IMR-90 (cell line): ENCODE measurements at regions of chr17 and their contacts with region 1.

Region 1: GRCh38 chr17:41060052-41060604 is at the start of gene KRTAP2-3:
- DNase-seq: peak; percentile 97
- ATAC-seq: peak; percentile 44
- H3K4me3 ChIP-seq: no peak within 1 kb of the TSS
- H3K27ac ChIP-seq: peak within 1 kb of the TSS; percentile 94
- H3K4me1 ChIP-seq: peaks cover 16% of the 10 kb centered on the region
- H3K27me3 ChIP-seq: no peaks in the 10 kb centered on the region
- CTCF ChIP-seq: no peak
- POLR2A ChIP-seq: no peak
- RAD21 ChIP-seq: no peak
- total RNA-seq, gene KRTAP2-3: 1.4 TPM in 2 replicates

Region 2: GRCh38 chr17:40956401-40957254 is 103.5 kb before region 1 on chr17:
- CTCF ChIA-PET with region 1: no interaction called
- POLR2A ChIA-PET with region 1: no interaction called
- dilution Hi-C with region 1: no loop called
- in situ Hi-C with region 1: no loop called
- intact Hi-C with region 1: loop called (anchors 5 kb)
- DNase-seq: peak; percentile 100
- ATAC-seq: peak; percentile 88
- H3K4me3 ChIP-seq: no peak overlapping the region
- H3K27ac ChIP-seq: no peak overlapping the region
- H3K4me1 ChIP-seq: peaks cover 16% of the 10 kb centered on the region
- H3K27me3 ChIP-seq: no peaks in the 10 kb centered on the region
- CTCF ChIP-seq: no peak
- POLR2A ChIP-seq: no peak
- RAD21 ChIP-seq: no peak; the same call in 1 of the 2 replicates

Region 3: DNA sequence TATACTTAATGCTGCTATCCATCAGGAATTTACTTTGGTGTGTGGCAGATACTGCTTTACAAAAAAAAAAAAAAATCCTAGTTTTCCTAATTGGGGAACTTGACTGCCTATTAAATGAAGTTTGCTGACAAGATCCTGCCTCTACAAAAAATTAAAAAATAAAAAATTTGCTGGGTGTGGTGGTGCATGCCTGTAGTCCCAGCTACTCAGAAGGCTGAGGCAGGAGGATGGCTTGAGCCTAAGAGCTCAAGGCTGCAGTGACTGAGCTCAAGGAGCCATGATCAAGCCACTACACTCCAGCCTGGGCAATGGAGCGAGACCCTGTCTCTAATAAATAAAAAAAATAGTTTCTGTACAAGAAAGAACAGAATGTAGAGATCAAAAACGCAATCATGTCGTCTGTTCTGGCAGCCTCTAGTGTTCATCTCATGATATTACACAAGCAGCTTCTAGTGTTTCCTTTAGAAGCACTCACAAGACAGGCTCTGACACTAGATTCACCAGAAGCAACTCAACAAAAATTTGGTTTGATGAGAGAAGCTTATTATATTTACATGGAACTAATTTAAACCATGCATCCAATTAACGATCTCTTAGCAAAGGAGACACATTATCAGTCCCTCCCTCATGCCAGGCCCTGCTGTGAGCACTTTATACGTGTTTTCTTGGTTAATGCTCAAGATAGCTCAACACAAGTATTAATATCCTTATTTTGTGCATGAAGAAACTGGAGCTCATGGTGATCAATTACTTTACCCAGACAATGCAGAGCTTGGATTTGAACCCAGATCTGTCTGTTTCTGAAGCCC is 262.2 kb after region 1 on chr17:
- CTCF ChIA-PET with region 1: interaction called, 7 read pairs
- POLR2A ChIA-PET with region 1: no interaction called
- dilution Hi-C with region 1: no loop called
- in situ Hi-C with region 1: no loop called
- intact Hi-C with region 1: loop called (anchors 5 kb)
- DNase-seq: peak; percentile 79
- ATAC-seq: peak; percentile 97
- H3K4me3 ChIP-seq: no peak overlapping the region
- H3K27ac ChIP-seq: peak overlapping the region; percentile 51; the same call in 1 of the 2 replicates
- H3K4me1 ChIP-seq: peaks cover 2% of the 10 kb centered on the region
- H3K27me3 ChIP-seq: no peaks in the 10 kb centered on the region
- CTCF ChIP-seq: peak; percentile 80
- POLR2A ChIP-seq: no peak
- RAD21 ChIP-seq: peak; percentile 81

Region 4: DNA sequence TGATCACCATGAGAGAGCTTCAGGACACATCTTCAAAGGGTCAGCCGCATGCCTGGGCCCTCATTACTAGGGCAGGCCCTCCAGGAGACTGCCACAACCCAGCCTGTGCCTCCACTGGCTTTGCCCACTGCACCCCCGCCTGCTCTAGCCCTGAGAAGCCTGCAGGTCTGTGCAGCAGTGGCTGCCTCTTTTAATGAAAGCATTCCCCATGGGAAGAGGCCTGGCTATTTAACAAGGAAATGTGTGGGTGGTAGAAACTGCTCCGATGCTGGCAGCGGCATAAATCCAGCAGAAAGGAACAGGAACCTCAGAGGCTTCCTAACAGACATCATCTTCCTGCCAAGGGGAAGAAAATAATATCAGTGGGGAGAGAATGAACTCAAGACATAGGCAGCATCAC is 407.4 kb after region 1 on chr17:
- CTCF ChIA-PET with region 1: no interaction called
- POLR2A ChIA-PET with region 1: interaction called, 12 read pairs
- dilution Hi-C with region 1: no loop called
- in situ Hi-C with region 1: no loop called
- intact Hi-C with region 1: no loop called
- DNase-seq: no peak
- ATAC-seq: no peak
- H3K4me3 ChIP-seq: no peak overlapping the region
- H3K27ac ChIP-seq: no peak overlapping the region
- H3K4me1 ChIP-seq: peaks cover 8% of the 10 kb centered on the region
- H3K27me3 ChIP-seq: peaks cover 24% of the 10 kb centered on the region
- CTCF ChIP-seq: no peak
- POLR2A ChIP-seq: no peak
- RAD21 ChIP-seq: no peak

Region 5: DNA sequence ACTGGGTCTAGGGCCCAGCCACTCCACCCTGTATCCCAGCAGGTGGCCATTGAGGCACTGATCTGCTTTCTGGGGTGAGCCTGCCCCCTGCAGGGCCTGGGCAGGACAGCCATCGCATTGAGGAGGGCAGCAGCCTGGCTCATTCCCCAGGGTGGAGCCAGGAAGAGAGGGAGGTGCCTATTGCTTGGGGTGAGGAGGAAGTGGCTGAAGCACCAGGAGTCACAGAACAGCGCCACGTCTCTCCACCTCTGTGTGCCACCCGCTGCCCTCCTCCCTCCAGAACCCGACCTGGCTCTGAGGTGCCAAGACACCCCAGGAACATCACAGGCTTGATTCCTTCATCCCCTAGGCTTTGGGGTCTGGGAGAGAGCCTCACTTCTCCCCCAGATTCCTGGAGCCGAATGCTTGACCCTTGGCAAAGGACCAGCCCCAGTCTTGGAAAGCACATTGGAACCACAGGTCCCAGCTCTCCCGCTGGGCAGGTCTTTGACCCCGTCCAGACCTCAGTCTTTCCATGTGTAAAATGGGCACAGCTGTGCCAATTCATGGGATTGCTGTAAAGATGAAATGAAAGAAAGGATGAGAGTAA is 436.8 kb after region 1 on chr17:
- CTCF ChIA-PET with region 1: no interaction called
- POLR2A ChIA-PET with region 1: no interaction called
- dilution Hi-C with region 1: no loop called
- in situ Hi-C with region 1: no loop called
- intact Hi-C with region 1: loop called (anchors 5 kb)
- DNase-seq: peak; percentile 83
- ATAC-seq: peak; percentile 97
- H3K4me3 ChIP-seq: no peak overlapping the region
- H3K27ac ChIP-seq: peak overlapping the region; percentile 36; the same call in 1 of the 2 replicates
- H3K4me1 ChIP-seq: peaks cover 22% of the 10 kb centered on the region
- H3K27me3 ChIP-seq: no peaks in the 10 kb centered on the region
- CTCF ChIP-seq: peak; percentile 93
- POLR2A ChIP-seq: no peak
- RAD21 ChIP-seq: peak; percentile 94

Region 6: DNA sequence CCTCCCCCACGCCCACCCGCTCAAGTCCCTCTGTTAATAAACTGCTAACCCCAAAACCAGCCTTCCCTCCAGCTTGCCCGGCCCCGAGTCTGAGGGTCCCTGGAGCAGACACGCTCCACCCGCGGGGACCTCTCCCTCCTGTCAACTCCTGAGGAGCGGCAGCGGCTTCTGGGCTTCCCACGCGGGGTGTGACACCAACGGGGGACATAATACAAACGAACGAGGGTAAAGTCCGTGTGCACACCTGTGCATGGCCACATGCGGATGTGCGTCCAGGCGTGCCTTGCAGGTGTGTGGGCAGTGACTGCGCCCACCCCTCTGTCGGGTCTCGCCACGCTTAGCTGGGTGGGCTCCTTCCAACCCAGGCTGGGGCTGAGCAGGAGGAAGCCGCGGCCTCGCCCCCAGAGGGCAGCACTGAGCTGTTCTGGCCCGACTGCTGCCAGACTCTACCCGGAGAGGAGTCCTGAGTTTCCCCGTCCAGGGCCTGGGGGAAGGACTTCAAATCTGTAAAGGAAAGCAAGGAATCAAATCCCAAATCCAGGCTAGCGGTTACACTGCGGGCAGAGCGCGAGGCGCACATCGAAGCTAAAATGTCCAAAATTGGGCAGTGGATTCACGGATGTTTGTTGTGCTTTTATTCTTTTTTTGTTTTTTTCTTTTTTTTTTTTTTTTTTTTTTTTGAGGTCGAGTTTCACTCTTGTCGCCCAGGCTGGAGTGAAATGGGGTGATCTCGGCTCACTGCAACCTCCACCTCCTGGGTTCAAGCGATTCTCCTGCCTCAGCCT is 588.5 kb after region 1 on chr17:
- CTCF ChIA-PET with region 1: no interaction called
- POLR2A ChIA-PET with region 1: no interaction called
- dilution Hi-C with region 1: no loop called
- in situ Hi-C with region 1: no loop called
- intact Hi-C with region 1: loop called (anchors 5 kb)
- DNase-seq: peak; percentile 77
- ATAC-seq: peak; percentile 92
- H3K4me3 ChIP-seq: 0 out of 2 replicates have a peak overlapping the region, but pooled peaks have one; percentile 9
- H3K27ac ChIP-seq: peak overlapping the region; percentile 79
- H3K4me1 ChIP-seq: peaks cover 14% of the 10 kb centered on the region
- H3K27me3 ChIP-seq: no peaks in the 10 kb centered on the region; the same call in 1 of the 2 replicates
- CTCF ChIP-seq: peak; percentile 84
- POLR2A ChIP-seq: no peak
- RAD21 ChIP-seq: peak; percentile 57

Region 7: DNA sequence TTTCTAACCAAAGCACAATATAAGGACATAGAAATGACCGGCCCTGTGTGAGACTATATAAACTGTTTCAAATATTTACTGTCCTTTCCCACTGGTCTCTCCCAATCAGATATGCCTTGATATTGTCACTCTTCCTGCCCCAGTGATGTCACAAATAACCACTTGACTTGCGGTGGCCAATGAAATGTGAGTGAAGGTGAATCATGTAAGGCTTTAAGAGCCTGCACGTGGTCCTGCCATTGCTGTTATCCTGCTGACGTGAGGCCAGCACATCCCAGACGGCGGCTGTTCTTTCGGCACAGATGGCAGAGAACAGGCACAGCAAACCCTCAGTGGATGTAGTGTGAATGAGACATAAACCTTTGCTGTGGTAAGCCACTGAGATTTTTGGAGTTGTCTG is 810.5 kb after region 1 on chr17:
- CTCF ChIA-PET with region 1: no interaction called
- POLR2A ChIA-PET with region 1: no interaction called
- dilution Hi-C with region 1: no loop called
- in situ Hi-C with region 1: no loop called
- intact Hi-C with region 1: no loop called
- DNase-seq: no peak
- ATAC-seq: no peak
- H3K4me3 ChIP-seq: no peak overlapping the region
- H3K27ac ChIP-seq: no peak overlapping the region
- H3K4me1 ChIP-seq: no peaks in the 10 kb centered on the region
- H3K27me3 ChIP-seq: no peaks in the 10 kb centered on the region
- CTCF ChIP-seq: no peak
- POLR2A ChIP-seq: no peak
- RAD21 ChIP-seq: no peak